GM12878 (cell line): ENCODE measurements at regions of chr16 and their contacts with region 1.

Region 1: DNA sequence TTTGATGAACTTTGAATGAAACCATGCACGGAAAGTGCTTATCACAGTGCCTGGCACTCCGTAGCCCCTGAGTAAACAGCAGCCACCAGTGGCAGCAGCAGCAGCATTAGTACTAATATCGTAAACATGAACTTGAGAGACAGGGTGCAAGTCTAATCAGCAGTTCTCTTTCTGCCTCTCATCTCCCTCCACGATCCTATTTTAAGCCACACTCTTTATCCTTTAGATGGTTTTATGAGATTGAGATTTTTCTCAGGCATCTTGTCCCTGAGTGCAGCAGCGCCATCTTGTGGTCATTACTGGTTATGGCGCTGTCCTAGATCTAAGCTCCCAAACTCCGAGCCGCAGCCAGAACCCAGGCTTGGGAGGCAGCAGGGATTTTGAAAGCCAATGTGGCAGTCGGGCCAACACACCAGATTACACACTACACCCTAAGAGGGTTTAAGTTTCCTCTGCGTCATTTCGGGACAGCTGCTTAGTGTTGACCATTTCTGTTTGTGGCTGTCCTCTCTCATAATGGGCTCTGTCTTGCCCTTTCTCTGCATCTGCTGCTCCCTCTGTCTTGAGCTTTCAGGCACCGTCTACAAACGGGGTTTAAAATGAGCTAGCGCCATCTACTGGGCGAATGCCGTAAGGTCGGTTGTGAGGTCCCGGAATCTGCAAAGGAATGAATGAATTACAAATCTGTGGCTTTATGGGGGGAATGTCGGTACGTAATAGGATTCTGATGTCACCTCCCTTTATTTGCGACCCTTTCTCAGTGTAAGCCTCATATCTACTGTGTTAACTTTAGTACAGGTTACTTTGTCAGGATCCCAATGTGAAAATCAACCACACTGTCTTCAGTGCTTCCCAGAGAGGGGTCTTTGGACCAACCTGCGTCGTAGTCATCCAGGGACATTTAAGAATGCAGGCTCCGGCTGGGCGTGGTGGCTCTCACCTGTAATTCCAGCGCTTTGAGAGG is 64.5 kb downstream of the CYLD start:
- DNase-seq: peak; percentile 81
- ATAC-seq: peak; percentile 95
- H3K4me3 ChIP-seq: no peak overlapping the region
- H3K27ac ChIP-seq: no peak overlapping the region
- H3K4me1 ChIP-seq: peaks cover 4% of the 10 kb centered on the region; the same call in 1 of the 2 replicates
- H3K27me3 ChIP-seq: no peaks in the 10 kb centered on the region
- CTCF ChIP-seq: peak; percentile 84 to 90 (median 89)
- EP300 ChIP-seq: no peak
- POLR2A ChIP-seq: no peak
- RAD21 ChIP-seq: peak; percentile 87

Region 2: DNA sequence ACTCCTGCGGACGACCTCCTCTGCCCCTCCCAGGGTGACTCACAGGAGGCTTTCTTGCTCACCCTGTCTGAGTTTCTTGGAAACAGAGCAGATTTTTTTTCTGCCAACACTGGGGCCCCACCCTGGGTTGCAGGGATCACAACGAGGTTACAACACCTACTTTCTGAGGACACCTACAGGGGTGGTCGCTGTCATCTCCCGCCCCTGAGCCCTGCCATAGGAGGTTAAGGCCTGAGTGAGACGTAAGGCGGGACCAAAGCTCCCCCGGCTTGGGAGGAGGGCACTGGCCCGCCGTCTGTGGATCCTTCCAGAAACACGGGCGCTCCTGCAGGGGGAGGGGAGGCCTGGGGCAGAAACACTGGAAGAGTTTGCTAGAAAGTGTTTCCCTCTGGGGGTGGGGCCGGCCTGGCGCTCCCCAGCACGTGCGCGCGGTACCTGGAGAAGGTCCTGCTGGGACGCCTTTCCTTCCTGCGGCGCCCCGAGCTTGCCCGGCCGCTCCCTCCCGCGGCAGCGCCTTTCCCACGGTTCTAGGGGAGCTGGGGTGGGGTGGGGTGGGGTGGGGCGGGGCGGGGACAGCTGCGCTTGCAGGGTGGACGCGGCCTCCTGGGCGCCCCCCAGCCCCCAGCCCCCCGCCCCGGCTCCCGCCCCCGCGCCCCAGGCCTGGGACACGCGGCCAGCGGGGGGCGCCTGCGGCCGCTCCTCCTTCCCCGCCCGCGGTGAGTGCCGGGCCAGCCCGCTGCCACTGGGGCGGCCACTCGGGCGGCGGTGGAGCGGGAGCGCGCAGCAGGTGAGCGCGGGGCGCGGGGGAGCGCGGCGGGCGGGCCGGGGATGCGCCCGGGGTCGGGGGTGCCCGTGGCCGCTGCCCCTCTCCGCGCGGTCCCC is 560.7 kb before region 1 on chr16:
- CTCF ChIA-PET with region 1: interaction called, 4 read pairs
- POLR2A ChIA-PET with region 1: no interaction called
- RAD21 ChIA-PET with region 1: interaction called, 4 read pairs
- SMC1A ChIA-PET with region 1: no interaction called
- in situ Hi-C with region 1: no loop called
- intact Hi-C with region 1: loop called (anchors 10 kb)
- DNase-seq: no peak
- ATAC-seq: peak; percentile 88
- H3K4me3 ChIP-seq: peak overlapping the region; percentile 75
- H3K27ac ChIP-seq: no peak overlapping the region
- H3K4me1 ChIP-seq: no peaks in the 10 kb centered on the region
- H3K27me3 ChIP-seq: no peaks in the 10 kb centered on the region
- CTCF ChIP-seq: peak in 2 of 3 experiments; percentile 14 to 48; a peak in 3 of 6 replicates
- EP300 ChIP-seq: no peak
- POLR2A ChIP-seq: 0 out of 2 replicates have a peak, but pooled peaks have one; percentile 19
- RAD21 ChIP-seq: peak; percentile 49

Region 3: DNA sequence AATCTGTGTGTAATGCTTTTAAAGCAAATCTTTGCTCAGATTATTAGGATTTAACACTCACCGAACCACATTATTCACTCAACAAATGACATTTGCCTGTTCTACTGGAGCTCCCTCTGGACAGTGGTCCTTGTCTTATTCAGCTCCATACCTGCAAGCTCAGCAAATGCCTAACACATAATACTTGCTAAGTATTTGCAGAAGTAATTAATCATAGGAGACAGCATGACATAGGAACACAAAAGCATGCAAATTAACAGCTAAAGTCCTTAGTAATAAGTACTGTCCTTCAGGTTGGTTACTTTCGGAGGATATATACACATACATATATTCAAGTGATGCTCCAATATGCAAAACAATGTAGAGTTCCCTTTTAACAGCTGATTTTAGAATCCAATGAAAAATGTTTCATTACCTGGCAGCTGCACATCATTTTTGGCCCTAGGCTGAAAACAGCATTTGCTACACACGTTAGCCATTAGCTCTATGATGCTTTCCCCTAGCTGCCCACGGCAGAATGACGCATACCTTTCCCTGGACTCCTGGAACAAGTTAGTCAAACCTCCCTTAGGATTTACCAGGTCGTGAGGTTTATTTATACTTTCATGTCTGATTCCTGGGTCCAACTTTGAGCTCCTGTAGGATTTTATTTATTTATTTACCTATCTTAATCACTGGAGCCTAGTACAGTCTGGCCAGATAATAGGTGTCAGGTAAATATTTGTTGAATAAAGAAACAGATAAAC is 446.2 kb before region 1 on chr16:
- CTCF ChIA-PET with region 1: interaction called, 38 read pairs
- POLR2A ChIA-PET with region 1: no interaction called
- RAD21 ChIA-PET with region 1: interaction called, 24 read pairs
- SMC1A ChIA-PET with region 1: interaction called, 17 read pairs
- in situ Hi-C with region 1: loop called (anchors 5 kb)
- intact Hi-C with region 1: loop called (anchors 5 kb)
- DNase-seq: no peak
- ATAC-seq: peak; percentile 20; the same call in 2 of the 3 replicates
- H3K4me3 ChIP-seq: no peak overlapping the region
- H3K27ac ChIP-seq: no peak overlapping the region
- H3K4me1 ChIP-seq: no peaks in the 10 kb centered on the region
- H3K27me3 ChIP-seq: no peaks in the 10 kb centered on the region
- CTCF ChIP-seq: no peak
- EP300 ChIP-seq: no peak
- POLR2A ChIP-seq: no peak
- RAD21 ChIP-seq: no peak

Region 4: GRCh38 chr16:50665128-50665878 is 141.1 kb before region 1 on chr16:
- CTCF ChIA-PET with region 1: interaction called, 293 read pairs
- POLR2A ChIA-PET with region 1: no interaction called
- RAD21 ChIA-PET with region 1: interaction called, 78 read pairs
- SMC1A ChIA-PET with region 1: interaction called, 78 read pairs
- in situ Hi-C with region 1: no loop called
- intact Hi-C with region 1: loop called (anchors 1 kb)
- DNase-seq: no peak
- ATAC-seq: peak; percentile 68
- H3K4me3 ChIP-seq: no peak overlapping the region
- H3K27ac ChIP-seq: no peak overlapping the region
- H3K4me1 ChIP-seq: peaks cover 19% of the 10 kb centered on the region
- H3K27me3 ChIP-seq: no peaks in the 10 kb centered on the region
- CTCF ChIP-seq: peak; percentile 77 to 91 (median 86)
- EP300 ChIP-seq: no peak
- POLR2A ChIP-seq: no peak
- RAD21 ChIP-seq: peak; percentile 83

Region 5: GRCh38 chr16:50735629-50736122 is 70.7 kb before region 1 on chr16:
- CTCF ChIA-PET with region 1: interaction called, 10 read pairs
- POLR2A ChIA-PET with region 1: no interaction called
- RAD21 ChIA-PET with region 1: interaction called, 3 read pairs
- SMC1A ChIA-PET with region 1: no interaction called
- in situ Hi-C with region 1: no loop called
- intact Hi-C with region 1: no loop called
- DNase-seq: peak; percentile 81
- ATAC-seq: peak; percentile 74
- H3K4me3 ChIP-seq: no peak overlapping the region
- H3K27ac ChIP-seq: peak overlapping the region; percentile 55
- H3K4me1 ChIP-seq: peaks cover 26% of the 10 kb centered on the region
- H3K27me3 ChIP-seq: no peaks in the 10 kb centered on the region
- CTCF ChIP-seq: no peak
- EP300 ChIP-seq: peak; percentile 68 to 83; a peak in 3 of 4 replicates
- POLR2A ChIP-seq: no peak
- RAD21 ChIP-seq: no peak

Region 6: GRCh38 chr16:50765260-50765659 is 41.1 kb before region 1 on chr16:
- CTCF ChIA-PET with region 1: interaction called, 18 read pairs
- POLR2A ChIA-PET with region 1: no interaction called
- RAD21 ChIA-PET with region 1: interaction called, 9 read pairs
- SMC1A ChIA-PET with region 1: no interaction called
- in situ Hi-C with region 1: no loop called
- intact Hi-C with region 1: no loop called
- DNase-seq: no peak
- ATAC-seq: no peak
- H3K4me3 ChIP-seq: no peak overlapping the region
- H3K27ac ChIP-seq: no peak overlapping the region
- H3K4me1 ChIP-seq: no peaks in the 10 kb centered on the region
- H3K27me3 ChIP-seq: no peaks in the 10 kb centered on the region
- CTCF ChIP-seq: no peak
- EP300 ChIP-seq: no peak
- POLR2A ChIP-seq: no peak
- RAD21 ChIP-seq: no peak

Region 7: DNA sequence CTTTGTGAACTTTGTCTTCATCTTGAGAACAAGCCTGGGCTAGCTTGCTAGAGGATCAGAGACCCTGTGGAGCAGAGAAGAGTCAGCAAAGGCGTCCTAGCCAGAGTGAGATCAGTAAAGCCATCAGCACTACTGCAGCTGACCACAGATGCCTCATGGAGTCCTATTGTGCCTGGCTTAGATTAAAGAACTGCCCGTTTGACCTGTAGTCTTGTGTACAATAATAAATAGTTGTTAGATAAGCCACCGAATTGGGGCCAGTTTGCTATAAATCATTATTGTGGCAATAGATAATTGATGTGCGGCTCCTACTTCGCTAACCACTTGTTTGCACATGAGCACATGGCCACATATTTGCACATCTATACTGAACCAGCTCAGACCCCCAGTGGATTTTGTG is 38.5 kb after region 1 on chr16:
- CTCF ChIA-PET with region 1: no interaction called
- POLR2A ChIA-PET with region 1: no interaction called
- RAD21 ChIA-PET with region 1: no interaction called
- SMC1A ChIA-PET with region 1: no interaction called
- in situ Hi-C with region 1: no loop called
- intact Hi-C with region 1: no loop called
- DNase-seq: no peak
- ATAC-seq: no peak
- H3K4me3 ChIP-seq: no peak overlapping the region
- H3K27ac ChIP-seq: no peak overlapping the region
- H3K4me1 ChIP-seq: no peaks in the 10 kb centered on the region
- H3K27me3 ChIP-seq: peaks cover 4 to 10% of the 10 kb centered on the region in 2 experiments
- CTCF ChIP-seq: no peak
- EP300 ChIP-seq: no peak
- POLR2A ChIP-seq: no peak
- RAD21 ChIP-seq: no peak